ENCODE measurements at regions of chr2 and their contacts with region 1.

Region 1: GRCh38 chr2:20411361-20411894 is 35.4 kb upstream of the RHOB start:
- DNase-seq: peak; percentile 78

Region 2: DNA sequence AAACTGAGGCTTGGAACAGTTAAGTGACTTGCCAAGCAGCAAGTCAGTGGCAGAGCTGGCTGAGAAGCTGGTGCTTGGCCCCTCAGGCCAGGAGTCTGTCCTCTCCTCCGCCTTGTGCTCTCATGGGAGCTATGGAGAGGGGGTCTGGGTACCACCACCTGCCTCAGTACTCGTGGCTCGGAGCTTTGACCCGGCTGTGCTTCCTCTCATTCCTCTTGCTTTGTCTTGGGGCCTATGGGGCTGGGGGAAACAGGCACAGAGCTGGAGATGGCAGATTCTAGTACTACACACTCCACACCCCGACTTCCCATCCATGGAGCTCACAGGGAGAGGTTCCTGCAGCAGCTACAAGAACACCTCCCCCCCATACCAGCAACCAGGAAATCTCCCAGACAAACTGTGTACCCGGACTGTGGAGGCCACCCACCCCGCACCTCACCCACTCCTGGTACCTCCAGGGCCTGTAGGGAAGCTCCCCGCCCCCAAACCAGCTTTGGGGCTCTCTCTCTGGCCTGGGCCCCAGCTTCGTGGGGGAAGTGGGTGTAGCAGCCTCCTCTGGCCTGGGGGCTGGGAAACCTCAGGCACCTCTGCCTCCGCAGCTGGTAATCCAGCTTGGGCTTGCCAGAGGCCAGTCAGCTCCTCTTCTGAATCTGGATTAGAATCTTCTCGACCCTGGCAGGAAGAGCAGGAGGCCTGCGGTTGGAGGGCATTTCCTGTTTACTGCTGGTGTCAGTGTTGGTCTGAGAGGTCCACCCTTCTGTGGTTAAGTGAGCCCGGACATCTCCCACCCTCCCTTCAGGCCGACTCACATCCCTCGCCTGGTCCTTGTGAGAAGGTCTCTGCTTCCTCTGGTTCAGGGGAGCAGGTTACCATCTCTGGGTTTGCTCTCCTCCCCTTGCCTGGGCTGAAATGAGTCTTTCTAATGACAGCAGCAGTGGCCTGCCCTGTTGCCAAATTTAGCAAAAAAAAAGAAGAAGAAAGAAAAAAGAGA is 13.2 kb after region 1 on chr2:
- CTCF ChIA-PET with region 1: interaction called, 28 read pairs
- POLR2A ChIA-PET with region 1: no interaction called
- DNase-seq: no peak

Region 3: DNA sequence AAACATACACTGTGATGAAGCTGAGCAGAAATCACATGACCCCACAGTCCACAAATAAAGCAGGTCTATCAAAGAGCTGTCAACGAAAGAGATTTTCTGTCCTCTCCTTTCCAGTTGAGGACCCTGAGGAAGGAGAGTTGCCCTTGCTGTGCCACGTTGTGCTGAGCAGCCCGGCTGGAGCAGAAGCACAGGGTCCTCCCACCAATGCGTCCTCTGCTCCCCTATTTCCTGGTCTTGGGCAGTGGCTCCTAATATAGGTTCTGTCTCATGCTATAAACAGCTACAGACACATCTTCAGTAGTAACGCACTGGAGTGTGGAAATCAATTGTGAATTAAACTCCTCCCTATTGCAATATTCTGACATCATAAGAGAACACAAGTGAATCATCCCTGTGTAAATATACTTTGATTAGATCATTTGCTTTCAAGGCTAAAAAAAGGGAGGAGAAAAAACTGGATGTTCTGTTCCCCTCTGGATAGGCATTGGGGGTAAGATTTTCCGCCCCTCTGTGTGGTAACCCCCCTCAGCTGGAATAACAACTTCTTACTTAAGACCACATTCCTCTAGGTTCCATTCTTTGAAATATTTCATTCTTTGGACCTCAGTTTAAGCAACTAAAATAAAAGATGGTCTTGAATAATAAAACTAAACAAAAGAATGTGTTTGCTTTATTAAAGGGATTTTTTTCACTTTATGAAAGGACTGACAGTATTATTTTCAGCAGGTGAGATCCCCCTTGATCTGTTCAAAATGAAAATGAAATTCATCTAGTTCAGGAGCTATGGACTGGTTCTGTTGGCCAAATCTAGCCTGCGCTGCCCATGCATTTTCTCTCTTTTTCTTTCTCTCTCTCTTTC is 27.1 kb after region 1 on chr2:
- CTCF ChIA-PET with region 1: interaction called, 13 read pairs
- POLR2A ChIA-PET with region 1: no interaction called
- DNase-seq: no peak

Region 4: DNA sequence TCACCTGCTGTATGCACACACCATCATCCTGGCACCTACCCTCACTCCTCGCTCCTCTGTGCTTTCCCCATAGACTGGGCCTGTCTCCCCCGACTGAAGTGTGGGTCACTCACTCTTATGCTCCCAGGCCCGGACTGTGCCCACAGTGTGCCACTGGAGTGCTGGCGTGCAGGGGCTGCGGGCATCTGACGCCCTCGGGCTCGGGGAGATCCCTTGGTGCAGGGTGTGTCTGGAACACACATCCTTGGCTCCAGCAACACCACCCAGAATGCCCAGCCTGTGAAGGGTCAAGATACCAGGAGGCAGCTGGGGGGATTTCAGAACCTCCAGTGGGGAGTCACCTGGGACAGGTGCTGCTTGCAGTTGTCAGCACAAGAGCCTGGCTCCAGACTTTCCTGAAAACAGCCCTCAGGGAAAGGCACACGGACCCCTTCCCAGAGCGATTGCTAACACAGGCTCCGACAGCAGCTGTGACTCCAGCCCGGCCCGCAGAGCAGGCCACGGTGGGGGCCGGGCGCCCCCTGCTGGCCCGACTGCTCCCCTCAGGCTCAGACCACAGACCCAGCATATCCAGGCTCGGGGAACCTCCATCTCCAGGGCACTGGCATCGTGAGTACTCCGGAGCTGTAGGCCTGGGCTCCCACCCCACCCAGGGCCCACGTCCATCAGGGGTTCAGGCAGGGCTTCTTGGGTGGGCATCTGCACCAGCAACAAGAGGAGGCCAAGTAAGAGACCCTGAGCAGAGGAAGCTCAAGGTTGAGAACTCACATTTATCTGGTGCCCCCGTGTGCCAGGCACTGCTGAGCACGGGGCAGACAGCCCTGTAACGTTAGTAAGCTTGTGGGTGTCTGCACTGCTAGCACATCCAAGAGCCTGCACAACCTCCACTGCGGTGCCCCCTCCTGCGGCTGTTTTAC is 230.9 kb after region 1 on chr2:
- CTCF ChIA-PET with region 1: interaction called, 15 read pairs
- POLR2A ChIA-PET with region 1: no interaction called
- DNase-seq: peak; percentile 86

Region 5: GRCh38 chr2:20852139-20852538 is 440.7 kb after region 1 on chr2:
- CTCF ChIA-PET with region 1: no interaction called
- POLR2A ChIA-PET with region 1: no interaction called
- DNase-seq: no peak